Right ventricle myocardium inferior (tissue), 1 donor: ENCODE measurements at regions of chr20 and their contacts with region 1.

Region 1: GRCh38 chr20:3115190-3116107 is 30.9 kb upstream of the AVP start:
- DNase-seq: no peak
- ATAC-seq: peak; percentile 27

Region 2: DNA sequence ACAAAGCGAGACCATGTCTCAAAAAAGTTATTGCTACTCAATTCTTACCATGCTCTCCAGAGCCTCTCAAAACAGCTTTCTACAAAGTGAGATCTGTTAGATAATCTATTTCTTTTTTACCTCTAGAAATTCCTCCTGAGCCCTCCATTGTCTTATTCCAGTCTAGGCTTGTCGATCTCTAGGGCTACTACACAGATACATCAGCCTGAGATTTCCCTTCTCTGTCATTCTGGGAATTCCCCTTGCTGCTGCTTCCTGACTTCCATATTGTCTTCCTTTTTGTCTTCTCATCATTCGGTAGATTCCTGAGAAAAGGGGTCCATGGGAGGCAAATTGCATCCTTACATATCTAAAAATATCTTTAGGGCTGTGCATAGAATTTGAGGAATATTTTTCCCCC is 147.6 kb before region 1 on chr20:
- intact Hi-C with region 1: no loop called
- DNase-seq: no peak
- ATAC-seq: no peak

Region 3: DNA sequence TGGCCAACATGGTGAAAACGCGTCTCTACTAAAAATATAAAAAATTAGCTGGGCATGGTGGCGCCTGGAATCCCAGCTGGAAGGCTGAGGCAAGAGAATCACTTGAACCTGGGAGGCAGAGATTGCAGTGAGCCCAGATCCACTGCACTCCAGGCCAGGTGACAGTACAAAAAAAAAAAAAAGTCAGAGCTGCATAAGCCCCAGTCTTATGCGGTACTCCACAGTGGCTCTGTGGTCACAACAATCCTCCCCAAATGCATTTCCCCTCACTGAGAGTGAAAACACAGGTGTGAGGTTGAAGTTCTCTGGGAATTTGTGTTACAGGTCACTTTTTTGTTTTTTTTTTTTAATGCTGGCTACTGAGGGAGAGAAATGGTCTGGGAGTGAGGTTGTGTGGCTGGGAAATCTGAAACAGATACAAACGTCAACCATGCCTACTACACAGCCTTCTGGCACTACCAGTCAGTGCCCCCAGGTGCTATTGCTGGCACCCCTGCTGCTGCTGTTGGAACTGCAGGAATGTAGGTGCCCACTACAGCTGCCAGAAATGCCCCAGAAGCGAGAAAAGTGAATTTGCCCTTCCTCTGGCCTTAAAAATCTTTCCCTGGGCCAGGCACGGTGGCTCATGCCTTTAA is 63.9 kb before region 1 on chr20:
- intact Hi-C with region 1: loop called (anchors 1 kb)
- DNase-seq: no peak
- ATAC-seq: no peak